Caco-2 (cell line): ENCODE measurements at regions of chr6 and their contacts with region 1.

Region 1: DNA sequence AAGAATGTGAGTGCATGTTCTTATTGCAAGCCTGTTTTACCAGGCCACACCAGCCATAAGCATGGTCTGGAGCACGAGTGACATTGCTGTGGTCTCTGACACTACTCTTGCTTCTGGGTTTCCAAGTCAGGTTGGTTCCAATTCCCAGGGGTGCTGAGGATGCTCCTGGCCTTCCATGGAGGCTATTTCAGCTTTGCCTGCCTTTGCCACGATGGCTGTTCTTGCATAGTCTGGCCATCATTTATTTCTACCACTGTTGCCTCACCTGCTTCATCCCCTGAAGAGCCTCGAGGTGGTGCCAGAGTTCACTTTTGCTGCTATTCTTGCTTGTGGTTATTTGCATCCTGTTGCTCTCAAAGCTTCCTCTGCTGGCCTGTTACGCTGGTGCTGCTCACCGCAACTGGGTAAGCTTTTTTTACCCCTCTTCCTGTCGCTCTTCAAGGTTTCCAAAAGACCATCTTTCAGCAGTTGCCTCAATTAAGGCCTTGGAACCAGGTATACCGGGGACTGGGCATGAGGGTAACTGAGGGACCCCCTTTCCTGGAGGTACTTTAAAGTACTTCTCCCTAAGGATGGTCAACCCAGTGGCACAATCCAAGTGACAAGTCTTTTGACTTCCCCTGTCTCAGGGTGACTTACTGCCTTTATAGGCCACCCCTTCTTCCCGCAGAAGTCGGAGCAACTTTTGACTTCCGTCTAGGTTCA is 64.5 kb downstream of the AKAP7 start:
- DNase-seq: peak; percentile 56 to 62
- H3K4me3 ChIP-seq: no peak overlapping the region
- H3K4me3 Mint-ChIP-seq: no peak overlapping the region
- H3K27ac Mint-ChIP-seq: no peak overlapping the region
- H3K4me1 ChIP-seq: no peaks in the 10 kb centered on the region
- H3K4me1 Mint-ChIP-seq: no peaks in the 10 kb centered on the region
- H3K27me3 ChIP-seq: no peaks in the 10 kb centered on the region
- H3K27me3 Mint-ChIP-seq: no peaks in the 10 kb centered on the region
- CTCF ChIP-seq: peak; percentile 72 to 80

Region 2: GRCh38 chr6:131379948-131380347 is 180.2 kb after region 1 on chr6:
- CTCF ChIA-PET with region 1: no interaction called
- POLR2A ChIA-PET with region 1: no interaction called
- intact Hi-C with region 1: loop called (anchors 10 kb)
- DNase-seq: no peak
- H3K4me3 ChIP-seq: no peak overlapping the region
- H3K4me3 Mint-ChIP-seq: no peak overlapping the region
- H3K27ac Mint-ChIP-seq: no peak overlapping the region
- H3K4me1 ChIP-seq: no peaks in the 10 kb centered on the region
- H3K4me1 Mint-ChIP-seq: no peaks in the 10 kb centered on the region
- H3K27me3 ChIP-seq: no peaks in the 10 kb centered on the region
- H3K27me3 Mint-ChIP-seq: no peaks in the 10 kb centered on the region
- CTCF ChIP-seq: no peak

Region 3: GRCh38 chr6:131627724-131628682 is 428.3 kb after region 1 on chr6 and contains the start of gene MED23:
- CTCF ChIA-PET with region 1: interaction called, 9 read pairs
- POLR2A ChIA-PET with region 1: no interaction called
- intact Hi-C with region 1: loop called (anchors 1 kb)
- DNase-seq: peak; percentile 95 to 97
- H3K4me3 ChIP-seq: peak within 1 kb of the TSS; percentile 82
- H3K4me3 Mint-ChIP-seq: peak within 1 kb of the TSS; percentile 89
- H3K27ac Mint-ChIP-seq: peak within 1 kb of the TSS; percentile 84
- H3K4me1 ChIP-seq: 0 out of 2 replicates have a peak, but pooled peaks cover 5% of the 10 kb centered on the region
- H3K4me1 Mint-ChIP-seq: no peaks in the 10 kb centered on the region
- H3K27me3 ChIP-seq: no peaks in the 10 kb centered on the region
- H3K27me3 Mint-ChIP-seq: no peaks in the 10 kb centered on the region
- CTCF ChIP-seq: peak; percentile 98 to 100
- total RNA-seq, gene MED23: 19.1 and 22.4 TPM in 2 replicates